B cell (primary cell): ENCODE measurements at regions of chr10 and their contacts with region 1.

Region 1: DNA sequence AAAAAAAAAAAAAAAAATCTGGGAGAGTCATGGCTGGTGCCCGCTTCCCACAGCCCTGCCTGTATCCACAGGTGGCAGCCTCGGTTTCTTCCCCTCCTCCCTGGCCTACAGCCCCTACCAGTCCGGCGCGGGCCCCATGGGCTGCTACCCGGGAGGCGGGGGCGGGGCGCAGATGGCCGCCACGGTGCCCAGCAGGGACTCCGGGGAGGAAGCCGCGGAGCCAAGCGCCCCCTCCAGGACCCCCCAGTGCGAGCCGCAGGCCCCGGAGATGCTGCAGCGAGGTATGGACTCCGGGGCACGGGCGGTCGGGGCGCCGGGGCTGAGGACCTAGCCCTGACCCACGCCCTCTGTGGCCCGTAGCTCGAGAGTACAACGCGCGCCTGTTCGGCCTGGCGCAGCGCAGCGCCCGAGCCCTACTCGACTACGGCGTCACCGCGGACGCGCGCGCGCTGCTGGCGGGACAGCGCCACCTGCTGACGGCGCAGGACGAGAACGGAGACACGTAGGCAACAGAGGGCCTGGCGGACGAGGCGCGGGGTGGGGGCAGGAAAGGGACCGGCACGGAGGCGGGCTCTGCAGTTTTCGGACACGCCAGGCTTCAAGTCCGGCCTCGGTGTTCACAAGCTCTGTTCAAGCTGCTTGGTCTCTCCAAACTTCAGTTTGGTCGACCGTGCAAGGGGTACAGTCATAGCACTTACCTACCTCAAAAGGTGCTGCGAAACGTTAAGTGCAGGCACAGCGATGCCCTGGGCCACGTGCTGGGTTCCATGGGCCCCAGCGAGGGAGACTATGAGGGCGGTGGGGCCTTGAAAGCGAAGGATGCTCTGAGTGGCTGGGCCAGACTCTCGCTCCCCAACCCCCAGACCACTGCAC is 3.9 kb downstream of the NFKB2 start:
- DNase-seq: peak; percentile 94
- ATAC-seq: peak; percentile 39
- H3K4me3 ChIP-seq: peak overlapping the region in 4 of 5 experiments; percentile 29 to 53 (median 49)
- H3K4me3 Mint-ChIP-seq: peak overlapping the region; percentile 95
- H3K27ac ChIP-seq: peak overlapping the region; percentile 74 to 80
- H3K27ac Mint-ChIP-seq: peak overlapping the region; percentile 92
- H3K4me1 ChIP-seq: peaks cover 36 to 46% of the 10 kb centered on the region in 2 donors
- H3K4me1 Mint-ChIP-seq: peaks cover 46% of the 10 kb centered on the region
- H3K27me3 ChIP-seq: no peaks in the 10 kb centered on the region
- H3K27me3 Mint-ChIP-seq: no peaks in the 10 kb centered on the region
- CTCF ChIP-seq: peak; percentile 94

Region 2: GRCh38 chr10:102310361-102311024 is 89.0 kb before region 1 on chr10:
- CTCF ChIA-PET with region 1: no interaction called
- POLR2A ChIA-PET with region 1: no interaction called
- intact Hi-C with region 1: no loop called
- DNase-seq: no peak
- ATAC-seq: no peak
- H3K4me3 ChIP-seq: no peak overlapping the region
- H3K4me3 Mint-ChIP-seq: no peak overlapping the region
- H3K27ac ChIP-seq: no peak overlapping the region
- H3K27ac Mint-ChIP-seq: no peak overlapping the region
- H3K4me1 ChIP-seq: no peaks in the 10 kb centered on the region
- H3K4me1 Mint-ChIP-seq: peaks cover 15% of the 10 kb centered on the region
- H3K27me3 ChIP-seq: no peaks in the 10 kb centered on the region
- H3K27me3 Mint-ChIP-seq: no peaks in the 10 kb centered on the region
- CTCF ChIP-seq: no peak

Region 3: GRCh38 chr10:102384053-102384452 is 15.4 kb before region 1 on chr10:
- CTCF ChIA-PET with region 1: interaction called, 29 read pairs
- POLR2A ChIA-PET with region 1: interaction called, 4 read pairs
- intact Hi-C with region 1: no loop called
- DNase-seq: no peak
- ATAC-seq: no peak
- H3K4me3 ChIP-seq: no peak overlapping the region
- H3K4me3 Mint-ChIP-seq: no peak overlapping the region
- H3K27ac ChIP-seq: no peak overlapping the region
- H3K27ac Mint-ChIP-seq: no peak overlapping the region
- H3K4me1 ChIP-seq: peaks cover 0 to 8% of the 10 kb centered on the region in 2 donors
- H3K4me1 Mint-ChIP-seq: peaks cover 12% of the 10 kb centered on the region
- H3K27me3 ChIP-seq: no peaks in the 10 kb centered on the region
- H3K27me3 Mint-ChIP-seq: no peaks in the 10 kb centered on the region
- CTCF ChIP-seq: no peak

Region 4: DNA sequence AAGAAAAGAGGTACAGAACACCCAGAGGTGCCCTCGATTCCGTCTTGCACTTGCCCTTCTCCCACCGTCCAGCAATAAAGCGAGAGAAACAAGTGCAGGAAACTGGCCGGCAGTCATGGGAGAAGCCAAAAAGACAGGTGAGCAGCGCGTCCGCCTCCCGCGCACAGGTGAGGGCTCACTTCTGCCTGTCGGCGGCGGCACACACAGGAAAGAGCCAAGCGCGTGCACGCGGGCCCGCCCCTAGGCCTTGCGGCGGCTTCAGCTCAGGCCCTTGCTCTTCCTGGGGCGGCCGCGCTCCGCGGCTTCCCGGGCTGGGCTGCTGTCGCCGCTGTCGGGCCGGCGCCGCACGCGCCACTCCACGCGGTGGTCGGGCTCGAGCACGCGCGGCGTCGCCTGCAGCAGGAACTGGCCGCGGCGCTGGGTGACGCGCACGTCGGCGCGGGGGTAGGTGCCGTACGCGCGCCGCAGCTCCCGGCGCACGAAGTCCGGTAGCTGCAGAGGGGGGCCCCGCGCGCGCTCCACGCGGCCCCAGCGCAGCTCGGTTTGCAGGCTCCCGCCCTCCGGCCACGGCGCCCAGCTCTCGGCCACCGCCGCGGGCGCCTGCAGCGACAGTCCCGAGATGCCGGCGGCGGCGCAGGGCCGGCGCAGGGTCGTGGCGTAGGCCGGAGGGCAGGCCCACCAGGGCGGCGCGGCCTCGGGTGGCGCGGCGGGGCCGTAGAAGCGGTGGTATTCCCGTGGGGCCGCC is 50.9 kb after region 1 on chr10:
- CTCF ChIA-PET with region 1: interaction called, 32 read pairs
- POLR2A ChIA-PET with region 1: interaction called, 31 read pairs
- intact Hi-C with region 1: loop called (anchors 1 kb)
- DNase-seq: peak; percentile 96
- ATAC-seq: peak; percentile 79
- H3K4me3 ChIP-seq: peak overlapping the region; percentile 75 to 97 (median 87)
- H3K4me3 Mint-ChIP-seq: peak overlapping the region; percentile 97
- H3K27ac ChIP-seq: peak overlapping the region; percentile 81 to 86
- H3K27ac Mint-ChIP-seq: peak overlapping the region; percentile 97
- H3K4me1 ChIP-seq: peaks cover 12 to 15% of the 10 kb centered on the region in 2 donors
- H3K4me1 Mint-ChIP-seq: peaks cover 19% of the 10 kb centered on the region
- H3K27me3 ChIP-seq: no peaks in the 10 kb centered on the region
- H3K27me3 Mint-ChIP-seq: no peaks in the 10 kb centered on the region
- CTCF ChIP-seq: no peak

Region 5: GRCh38 chr10:102467971-102468438 is 68.6 kb after region 1 on chr10:
- CTCF ChIA-PET with region 1: no interaction called
- POLR2A ChIA-PET with region 1: no interaction called
- intact Hi-C with region 1: no loop called
- DNase-seq: no peak
- ATAC-seq: no peak
- H3K4me3 ChIP-seq: no peak overlapping the region
- H3K4me3 Mint-ChIP-seq: no peak overlapping the region
- H3K27ac ChIP-seq: no peak overlapping the region
- H3K27ac Mint-ChIP-seq: no peak overlapping the region
- H3K4me1 ChIP-seq: peaks cover 0 to under 1% of the 10 kb centered on the region in 2 donors
- H3K4me1 Mint-ChIP-seq: peaks cover 5% of the 10 kb centered on the region
- H3K27me3 ChIP-seq: no peaks in the 10 kb centered on the region
- H3K27me3 Mint-ChIP-seq: no peaks in the 10 kb centered on the region
- CTCF ChIP-seq: no peak